ENCODE measurements at regions of chr1 and their contacts with region 1.

Region 1: GRCh38 chr1:234499119-234499942 is 20.4 kb upstream of the TARBP1 start:
- DNase-seq: peak; percentile 97
- H3K4me3 Mint-ChIP-seq: peak overlapping the region; percentile 28
- H3K27ac Mint-ChIP-seq: peak overlapping the region; percentile 71
- H3K4me1 Mint-ChIP-seq: peaks cover 53% of the 10 kb centered on the region
- H3K27me3 Mint-ChIP-seq: no peaks in the 10 kb centered on the region
- CTCF ChIP-seq: peak; percentile 100

Region 2: GRCh38 chr1:234478481-234479309 is 20.6 kb before region 1 on chr1 and contains the start of gene TARBP1:
- CTCF ChIA-PET with region 1: interaction called, 7 read pairs
- POLR2A ChIA-PET with region 1: interaction called, 15 read pairs
- intact Hi-C with region 1: loop called (anchors 2 kb)
- DNase-seq: peak; percentile 89
- H3K4me3 Mint-ChIP-seq: peak within 1 kb of the TSS; percentile 77
- H3K27ac Mint-ChIP-seq: no peak within 1 kb of the TSS
- H3K4me1 Mint-ChIP-seq: peaks cover 31% of the 10 kb centered on the region
- H3K27me3 Mint-ChIP-seq: peaks cover 23% of the 10 kb centered on the region
- CTCF ChIP-seq: no peak
- total RNA-seq, gene TARBP1: 45.5 and 52.5 TPM in 2 replicates

Region 3: GRCh38 chr1:234533975-234534876 is 34.9 kb after region 1 on chr1:
- CTCF ChIA-PET with region 1: interaction called, 18 read pairs
- POLR2A ChIA-PET with region 1: interaction called, 443 read pairs
- intact Hi-C with region 1: loop called (anchors 2 kb)
- DNase-seq: peak; percentile 100
- H3K4me3 Mint-ChIP-seq: peak overlapping the region; percentile 31
- H3K27ac Mint-ChIP-seq: peak overlapping the region; percentile 93
- H3K4me1 Mint-ChIP-seq: peaks cover 43% of the 10 kb centered on the region
- H3K27me3 Mint-ChIP-seq: no peaks in the 10 kb centered on the region
- CTCF ChIP-seq: no peak

Region 4: GRCh38 chr1:234589854-234590620 is 90.7 kb after region 1 on chr1:
- CTCF ChIA-PET with region 1: interaction called, 65 read pairs
- POLR2A ChIA-PET with region 1: interaction called, 24 read pairs
- intact Hi-C with region 1: no loop called
- DNase-seq: peak; percentile 72
- H3K4me3 Mint-ChIP-seq: no peak overlapping the region
- H3K27ac Mint-ChIP-seq: peak overlapping the region; percentile 47
- H3K4me1 Mint-ChIP-seq: peaks cover 27% of the 10 kb centered on the region
- H3K27me3 Mint-ChIP-seq: no peaks in the 10 kb centered on the region
- CTCF ChIP-seq: no peak

Region 5: DNA sequence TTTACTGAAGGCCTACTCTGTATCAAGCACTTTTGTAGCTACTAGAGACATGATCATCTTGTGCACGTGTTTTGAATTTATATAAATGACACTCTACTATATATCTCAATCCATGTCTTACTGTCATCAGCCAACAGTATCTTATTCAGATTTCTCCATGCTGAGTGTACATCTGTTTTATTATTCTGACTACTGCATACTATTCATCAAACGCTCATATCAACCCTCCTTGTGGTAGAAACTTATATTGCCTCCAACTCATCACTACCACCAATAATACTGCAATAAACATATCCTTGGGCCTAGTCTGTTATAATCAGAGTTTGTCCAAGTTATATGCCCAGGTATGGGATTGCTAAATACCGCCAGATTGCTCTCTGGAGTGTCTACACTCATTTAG is 192.2 kb after region 1 on chr1:
- CTCF ChIA-PET with region 1: interaction called, 3 read pairs
- POLR2A ChIA-PET with region 1: interaction called, 4 read pairs
- intact Hi-C with region 1: loop called (anchors 1 kb)
- DNase-seq: peak; percentile 53
- H3K4me3 Mint-ChIP-seq: no peak overlapping the region
- H3K27ac Mint-ChIP-seq: no peak overlapping the region
- H3K4me1 Mint-ChIP-seq: no peaks in the 10 kb centered on the region
- H3K27me3 Mint-ChIP-seq: no peaks in the 10 kb centered on the region
- CTCF ChIP-seq: peak; percentile 30

Region 6: GRCh38 chr1:234907940-234908405 is 408.6 kb after region 1 on chr1:
- CTCF ChIA-PET with region 1: no interaction called
- POLR2A ChIA-PET with region 1: no interaction called
- intact Hi-C with region 1: no loop called
- DNase-seq: no peak
- H3K4me3 Mint-ChIP-seq: no peak overlapping the region
- H3K27ac Mint-ChIP-seq: no peak overlapping the region
- H3K4me1 Mint-ChIP-seq: no peaks in the 10 kb centered on the region
- H3K27me3 Mint-ChIP-seq: no peaks in the 10 kb centered on the region
- CTCF ChIP-seq: no peak

Region 7: DNA sequence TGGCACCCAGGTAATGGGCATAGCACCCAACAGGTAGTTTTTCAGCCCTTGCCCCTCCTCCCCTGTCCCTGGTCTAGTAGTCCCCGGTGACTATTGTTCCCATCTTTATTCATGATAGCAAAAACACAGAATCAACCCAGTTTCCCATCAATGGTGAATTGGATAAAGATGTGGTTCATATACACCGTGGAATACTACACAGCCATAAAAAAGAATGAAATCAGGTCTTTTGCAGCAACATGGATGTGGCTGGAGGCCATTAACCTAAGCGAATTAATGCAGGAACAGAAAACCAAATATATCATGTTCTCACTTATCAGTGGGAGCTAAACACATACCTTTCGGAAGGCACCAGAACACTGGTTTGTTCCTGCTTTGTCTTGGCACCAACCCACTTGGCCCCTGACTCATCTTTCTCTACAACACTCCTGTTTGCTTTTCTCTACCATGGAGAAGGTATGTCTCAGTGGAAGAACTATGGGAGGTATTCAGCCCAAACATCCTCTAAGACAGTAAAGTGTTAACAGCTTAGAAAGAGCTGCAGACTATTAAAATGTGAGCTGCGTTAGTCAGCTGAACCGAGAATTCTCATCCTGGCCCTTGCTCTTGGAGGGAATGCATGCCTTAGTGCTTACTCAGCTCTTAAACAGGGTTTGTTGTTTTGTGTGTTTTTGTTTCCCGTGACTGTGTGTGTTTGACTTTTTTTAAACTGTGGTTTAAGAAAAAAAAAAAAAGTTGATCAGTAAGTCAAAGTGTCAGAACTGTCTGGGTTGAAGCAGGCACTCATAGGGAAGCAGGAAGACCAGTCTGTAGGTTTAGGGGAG is 426.3 kb after region 1 on chr1:
- CTCF ChIA-PET with region 1: interaction called, 3 read pairs
- POLR2A ChIA-PET with region 1: interaction called, 9 read pairs
- intact Hi-C with region 1: loop called (anchors 1 kb)
- DNase-seq: peak; percentile 92
- H3K4me3 Mint-ChIP-seq: peak overlapping the region; percentile 26
- H3K27ac Mint-ChIP-seq: peak overlapping the region; percentile 83
- H3K4me1 Mint-ChIP-seq: peaks cover 20% of the 10 kb centered on the region
- H3K27me3 Mint-ChIP-seq: no peaks in the 10 kb centered on the region
- CTCF ChIP-seq: no peak

Region 8: DNA sequence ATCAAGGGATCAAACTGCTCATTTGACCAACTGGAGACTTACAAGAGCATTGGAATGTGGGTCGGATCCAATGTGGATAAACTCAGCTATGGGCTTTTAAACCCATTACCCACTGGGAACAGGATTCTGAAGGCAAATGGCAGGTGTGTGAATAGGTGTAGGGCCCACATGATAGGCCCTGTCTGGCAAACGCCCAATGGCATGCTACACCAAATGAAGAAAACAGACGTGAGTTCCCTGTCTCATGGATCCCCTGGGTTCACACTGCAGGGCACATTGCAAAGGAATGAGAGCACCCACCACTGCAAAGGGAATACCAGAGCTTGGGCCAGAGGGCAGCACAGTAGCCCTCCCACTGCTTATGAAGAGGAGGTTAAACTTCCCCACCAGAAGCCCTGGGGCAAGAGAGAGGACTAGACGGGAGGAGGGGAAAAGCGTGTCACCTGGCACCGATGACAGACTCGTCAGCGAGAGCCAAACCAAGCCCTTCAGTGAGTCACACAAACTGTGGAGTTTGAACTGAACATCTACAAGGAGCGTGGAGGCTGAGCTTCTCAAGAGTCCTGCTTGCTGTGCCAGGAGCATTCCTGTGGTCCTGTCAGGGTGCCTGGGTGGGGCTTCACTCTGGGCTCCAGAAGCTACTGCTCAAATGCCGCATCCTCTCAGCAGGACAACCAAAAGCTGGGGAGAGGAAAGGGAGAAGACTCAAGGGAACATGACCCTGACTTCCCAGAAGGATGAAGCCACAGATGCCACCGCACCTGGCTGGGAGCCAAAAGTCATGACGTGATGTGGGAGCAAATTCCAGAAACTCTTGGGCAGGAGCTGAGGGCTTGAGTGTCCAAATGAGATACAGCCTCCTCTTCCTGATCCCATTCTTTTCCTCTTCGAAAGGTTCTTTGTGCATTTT is 568.2 kb after region 1 on chr1:
- CTCF ChIA-PET with region 1: interaction called, 7 read pairs
- POLR2A ChIA-PET with region 1: interaction called, 12 read pairs
- intact Hi-C with region 1: no loop called
- DNase-seq: peak; percentile 100
- H3K4me3 Mint-ChIP-seq: peak overlapping the region; percentile 54
- H3K27ac Mint-ChIP-seq: peak overlapping the region; percentile 97
- H3K4me1 Mint-ChIP-seq: peaks cover 53% of the 10 kb centered on the region
- H3K27me3 Mint-ChIP-seq: no peaks in the 10 kb centered on the region
- CTCF ChIP-seq: no peak

Measured in MCF 10A (cell line).